ENCODE measurements at regions of chr9 and their contacts with region 1.

Region 1: GRCh38 chr9:100066539-100066938 is 32.3 kb downstream of the ERP44 start:
- DNase-seq: peak; percentile 26
- CTCF ChIP-seq: no peak

Region 2: DNA sequence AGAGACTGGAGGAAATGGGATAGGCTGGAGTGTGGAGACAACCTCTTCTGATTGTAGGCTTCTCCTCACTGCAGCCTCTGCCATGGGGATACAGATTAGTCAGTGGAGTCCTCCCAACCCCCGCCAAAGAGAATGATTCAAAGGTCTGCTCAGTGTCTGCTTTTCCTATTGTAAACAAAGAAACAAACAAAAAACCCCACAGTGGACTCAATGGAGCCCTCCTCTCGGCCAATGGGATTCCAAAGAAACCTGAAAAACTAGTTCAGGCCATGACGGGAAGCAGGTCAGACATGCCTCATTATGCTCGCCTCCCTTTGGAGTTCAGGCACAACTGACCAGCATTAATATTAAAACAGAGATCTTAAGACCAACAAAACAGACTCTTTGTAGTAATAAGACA is 758.7 kb before region 1 on chr9:
- CTCF ChIA-PET with region 1: no interaction called
- POLR2A ChIA-PET with region 1: no interaction called
- DNase-seq: no peak
- CTCF ChIP-seq: no peak

Region 3: GRCh38 chr9:100105861-100106260 is 39.3 kb after region 1 on chr9:
- CTCF ChIA-PET with region 1: interaction called, 5 read pairs
- POLR2A ChIA-PET with region 1: interaction called, 10 read pairs
- DNase-seq: no peak
- CTCF ChIP-seq: no peak

Measured in GM10248 (cell line).